ENCODE measurements at regions of chr5 and their contacts with region 1.

Region 1: GRCh38 chr5:126449751-126450271 is 26.6 kb downstream of the GRAMD2B start:
- DNase-seq: peak; percentile 55
- H3K4me3 Mint-ChIP-seq: peak overlapping the region; percentile 82
- H3K27ac Mint-ChIP-seq: peak overlapping the region; percentile 99
- H3K4me1 Mint-ChIP-seq: peaks cover 67% of the 10 kb centered on the region
- H3K27me3 Mint-ChIP-seq: no peaks in the 10 kb centered on the region

Region 2: GRCh38 chr5:126414874-126415502 is 34.8 kb before region 1 on chr5:
- intact Hi-C with region 1: loop called (anchors 5 kb)
- DNase-seq: no peak
- H3K4me3 Mint-ChIP-seq: no peak overlapping the region
- H3K27ac Mint-ChIP-seq: no peak overlapping the region
- H3K4me1 Mint-ChIP-seq: peaks cover 5% of the 10 kb centered on the region
- H3K27me3 Mint-ChIP-seq: peaks cover 18% of the 10 kb centered on the region

Region 3: GRCh38 chr5:126438267-126438666 is 11.5 kb before region 1 on chr5:
- intact Hi-C with region 1: loop called (anchors 1 kb)
- DNase-seq: no peak
- H3K4me3 Mint-ChIP-seq: no peak overlapping the region
- H3K27ac Mint-ChIP-seq: peak overlapping the region; percentile 15
- H3K4me1 Mint-ChIP-seq: peaks cover 19% of the 10 kb centered on the region
- H3K27me3 Mint-ChIP-seq: no peaks in the 10 kb centered on the region

Region 4: DNA sequence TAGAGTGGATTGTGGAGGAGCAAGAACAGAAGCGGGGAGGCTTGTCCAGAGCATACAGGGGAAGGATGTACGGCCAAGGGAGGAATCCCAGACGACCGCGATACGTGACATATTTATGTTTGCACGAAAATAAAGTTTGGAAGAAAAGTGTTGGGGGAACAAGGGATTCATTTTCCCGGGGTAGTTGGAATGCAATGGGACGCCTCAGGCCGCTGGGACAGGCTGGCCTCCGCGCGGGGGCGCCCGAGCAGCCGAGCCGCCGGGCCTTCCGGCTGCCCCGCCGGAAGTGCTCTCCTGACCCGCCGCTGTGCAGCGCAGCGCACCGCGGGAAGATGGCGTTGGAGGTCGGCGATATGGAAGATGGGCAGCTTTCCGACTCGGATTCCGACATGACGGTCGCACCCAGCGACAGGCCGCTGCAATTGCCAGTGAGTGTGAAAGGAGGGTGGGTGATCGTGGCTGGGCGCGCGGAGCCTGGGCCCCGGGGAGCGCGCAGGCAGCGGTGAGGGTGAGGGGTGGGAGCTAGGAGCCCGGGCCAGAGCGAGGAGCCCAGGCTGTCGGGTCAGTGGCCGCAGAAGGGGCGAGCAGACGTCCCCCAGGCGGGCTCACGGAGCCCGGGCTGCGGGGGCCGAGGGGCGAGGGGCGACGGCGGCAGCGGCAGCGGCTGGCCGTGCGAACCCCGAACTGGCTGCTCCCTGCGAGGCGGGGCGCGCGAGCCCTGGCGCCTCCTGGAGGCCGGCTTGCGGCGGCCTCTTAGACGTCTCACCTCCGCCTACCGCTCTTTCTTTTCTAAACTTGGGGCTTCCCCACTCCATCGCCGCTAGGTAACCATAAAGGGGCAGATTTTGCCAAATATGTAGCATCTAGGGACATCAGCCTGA is 151.1 kb after region 1 on chr5 and contains the start of gene PHAX:
- intact Hi-C with region 1: loop called (anchors 2 kb)
- DNase-seq: peak; percentile 64
- H3K4me3 Mint-ChIP-seq: peak within 1 kb of the TSS; percentile 94
- H3K27ac Mint-ChIP-seq: peak within 1 kb of the TSS; percentile 95
- H3K4me1 Mint-ChIP-seq: peaks cover 22% of the 10 kb centered on the region
- H3K27me3 Mint-ChIP-seq: peaks cover 2% of the 10 kb centered on the region
- total RNA-seq, gene PHAX: 45.3 and 47.7 TPM in 2 replicates

Region 5: GRCh38 chr5:127785098-127785927 is 1335.5 kb after region 1 on chr5:
- intact Hi-C with region 1: loop called (anchors 10 kb)
- DNase-seq: peak; percentile 27
- H3K4me3 Mint-ChIP-seq: peak overlapping the region; percentile 38
- H3K27ac Mint-ChIP-seq: peak overlapping the region; percentile 93
- H3K4me1 Mint-ChIP-seq: peaks cover 24% of the 10 kb centered on the region
- H3K27me3 Mint-ChIP-seq: peaks cover 6% of the 10 kb centered on the region